Spleen (tissue), 13 donors: ENCODE measurements at regions of chr19 and their contacts with region 1.

Region 1: GRCh38 chr19:5987077-5987818 is 9.3 kb upstream of the RANBP3 start:
- DNase-seq: peak; percentile 86
- H3K4me3 ChIP-seq: peak overlapping the region in 6 of 8 donors; percentile 6 to 67 (median 22)
- H3K27ac ChIP-seq: peak overlapping the region in 3 of 8 donors; percentile 14 to 51 (median 27)
- H3K4me1 ChIP-seq: peaks cover 0 to 31% (median 10%) of the 10 kb centered on the region in 6 donors
- H3K27me3 ChIP-seq: no peaks in the 10 kb centered on the region
- CTCF ChIP-seq: peak; percentile 85 to 94 (median 91)
- POLR2A ChIP-seq: no peak

Region 2: DNA sequence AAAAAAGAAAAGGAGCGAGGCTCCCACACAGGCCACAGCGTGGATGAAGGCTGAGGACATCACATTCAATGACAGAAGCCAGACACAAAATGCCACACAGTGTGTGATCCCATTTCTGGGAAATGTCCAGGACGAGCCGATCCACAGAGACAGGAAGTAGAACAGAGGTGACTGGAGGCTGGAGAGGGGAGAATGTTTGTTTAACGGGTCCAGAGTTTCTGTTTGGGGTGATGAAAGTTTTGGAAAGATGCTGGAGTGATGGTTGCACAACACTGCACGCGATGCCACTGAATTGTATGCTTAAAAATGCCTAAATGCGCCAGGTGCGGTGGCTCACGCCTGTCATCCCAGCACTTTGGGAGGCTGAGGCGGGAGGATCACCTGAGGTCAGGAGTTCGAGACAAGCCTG is 116.3 kb before region 1 on chr19:
- intact Hi-C with region 1: no loop called
- DNase-seq: no peak
- H3K4me3 ChIP-seq: no peak overlapping the region
- H3K27ac ChIP-seq: no peak overlapping the region
- H3K4me1 ChIP-seq: no peaks in the 10 kb centered on the region
- H3K27me3 ChIP-seq: peaks cover 0 to 15% (median 0%) of the 10 kb centered on the region in 7 donors
- CTCF ChIP-seq: no peak
- POLR2A ChIP-seq: no peak

Region 3: DNA sequence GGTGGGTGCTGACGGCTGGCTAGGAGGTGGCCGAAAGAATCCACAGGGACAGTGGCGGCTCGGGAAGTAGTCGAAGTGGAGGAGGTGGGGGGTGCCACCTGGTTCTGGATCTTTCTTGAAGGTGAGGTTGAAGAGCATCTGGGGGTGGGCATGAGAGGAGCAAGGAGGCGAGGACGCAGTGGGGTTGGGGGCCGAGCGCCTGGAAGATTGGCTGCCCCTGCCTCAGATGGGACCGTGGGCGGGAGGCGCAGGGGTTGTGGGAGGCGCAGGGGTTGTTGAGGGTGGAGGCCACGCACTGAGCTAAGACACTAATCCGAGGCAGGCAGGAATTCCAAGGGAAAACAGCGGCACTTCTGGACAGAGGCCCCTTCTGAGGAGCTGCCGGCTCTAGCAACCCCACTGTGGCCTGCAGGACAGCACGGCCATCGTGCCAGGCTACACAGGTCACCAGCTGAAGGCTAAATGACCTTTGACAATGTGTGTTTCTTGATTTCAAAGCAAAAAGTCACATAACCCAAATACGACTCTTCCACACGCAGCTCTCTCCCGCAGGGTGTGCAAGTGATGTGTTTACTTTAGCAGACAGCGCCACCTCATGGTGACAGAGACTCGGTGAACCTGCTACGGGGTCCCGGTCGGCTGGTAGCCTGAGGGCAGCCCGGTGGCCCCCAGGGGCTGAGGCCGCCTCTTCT is 34.8 kb after region 1 on chr19:
- intact Hi-C with region 1: loop called (anchors 1 kb)
- DNase-seq: peak; percentile 86
- H3K4me3 ChIP-seq: no peak overlapping the region
- H3K27ac ChIP-seq: peak overlapping the region in 1 of 8 donors; percentile 37
- H3K4me1 ChIP-seq: peaks cover 0 to 12% (median 7%) of the 10 kb centered on the region in 6 donors
- H3K27me3 ChIP-seq: peaks cover 0 to 13% (median 0%) of the 10 kb centered on the region in 7 donors
- CTCF ChIP-seq: peak; percentile 59 to 90 (median 81)
- POLR2A ChIP-seq: no peak